Pancreas (tissue), 10 donors: ENCODE measurements at regions of chrX and their contacts with region 1.

Region 1: DNA sequence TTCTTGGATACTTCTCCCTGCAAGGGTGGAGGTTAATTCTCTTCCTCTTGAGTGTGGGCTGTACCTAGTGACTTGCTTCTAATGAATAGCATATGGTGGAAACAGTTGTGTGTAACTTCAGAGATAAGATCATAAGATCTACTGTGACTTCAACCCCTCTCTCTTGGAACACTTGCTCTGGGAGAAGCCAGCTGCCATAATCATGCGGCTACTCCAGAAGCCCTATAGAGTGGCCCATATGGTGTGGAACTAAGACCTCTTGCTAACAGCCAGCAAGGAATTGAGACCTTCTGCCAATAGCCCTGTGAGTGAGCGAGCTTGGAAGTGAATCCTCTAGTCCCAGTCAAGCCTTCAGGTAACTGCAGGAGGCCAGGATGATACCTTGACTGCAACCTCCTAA is 81.1 kb downstream of the RBMX2 start:
- DNase-seq: no peak
- ATAC-seq: no peak
- H3K4me3 ChIP-seq: no peak overlapping the region
- H3K27ac ChIP-seq: no peak overlapping the region
- H3K4me1 ChIP-seq: no peaks in the 10 kb centered on the region
- H3K27me3 ChIP-seq: no peaks in the 10 kb centered on the region
- CTCF ChIP-seq: no peak

Region 2: GRCh38 chrX:129618997-129619396 is 863.9 kb before region 1 on chrX:
- intact Hi-C with region 1: loop called in 1 of 3 experiments (anchors 5 kb)
- DNase-seq: peak in 3 of 6 donors; percentile 19 to 54 (median 32)
- ATAC-seq: peak in 3 of 4 donors; percentile 42 to 81 (median 69)
- H3K4me3 ChIP-seq: no peak overlapping the region
- H3K27ac ChIP-seq: no peak overlapping the region
- H3K4me1 ChIP-seq: no peaks in the 10 kb centered on the region
- H3K27me3 ChIP-seq: peaks cover 0 to 4% (median 1%) of the 10 kb centered on the region in 4 donors
- CTCF ChIP-seq: no peak